Mammary epithelial cell (primary cell): ENCODE measurements at regions of chr22 and their contacts with region 1.

Region 1: GRCh38 chr22:43236411-43237166 is 49.7 kb upstream of the TTLL12 start:
- DNase-seq: no peak
- H3K4me3 ChIP-seq: no peak overlapping the region
- H3K27ac ChIP-seq: no peak overlapping the region
- H3K4me1 ChIP-seq: no peaks in the 10 kb centered on the region
- H3K27me3 ChIP-seq: peaks cover 4% of the 10 kb centered on the region
- CTCF ChIP-seq: no peak

Region 2: GRCh38 chr22:43289976-43290721 is 53.6 kb after region 1 on chr22:
- CTCF ChIA-PET with region 1: no interaction called
- dilution Hi-C with region 1: loop called (anchors 5 kb)
- in situ Hi-C with region 1: no loop called
- intact Hi-C with region 1: no loop called
- DNase-seq: peak; percentile 15
- H3K4me3 ChIP-seq: no peak overlapping the region
- H3K27ac ChIP-seq: no peak overlapping the region
- H3K4me1 ChIP-seq: no peaks in the 10 kb centered on the region
- H3K27me3 ChIP-seq: no peaks in the 10 kb centered on the region
- CTCF ChIP-seq: no peak

Region 3: GRCh38 chr22:43337385-43337784 is 100.8 kb after region 1 on chr22:
- CTCF ChIA-PET with region 1: no interaction called
- dilution Hi-C with region 1: loop called (anchors 5 kb)
- in situ Hi-C with region 1: no loop called
- intact Hi-C with region 1: no loop called
- DNase-seq: no peak
- H3K4me3 ChIP-seq: no peak overlapping the region
- H3K27ac ChIP-seq: no peak overlapping the region
- H3K4me1 ChIP-seq: no peaks in the 10 kb centered on the region
- H3K27me3 ChIP-seq: peaks cover 3% of the 10 kb centered on the region
- CTCF ChIP-seq: no peak

Region 4: GRCh38 chr22:43465291-43466015 is 228.9 kb after region 1 on chr22:
- CTCF ChIA-PET with region 1: no interaction called
- dilution Hi-C with region 1: no loop called
- in situ Hi-C with region 1: no loop called
- intact Hi-C with region 1: no loop called
- DNase-seq: no peak
- H3K4me3 ChIP-seq: no peak overlapping the region
- H3K27ac ChIP-seq: no peak overlapping the region
- H3K4me1 ChIP-seq: no peaks in the 10 kb centered on the region
- H3K27me3 ChIP-seq: no peaks in the 10 kb centered on the region
- CTCF ChIP-seq: no peak